BJ (cell line): ENCODE measurements at regions of chr16 and their contacts with region 1.

Region 1: GRCh38 chr16:48082516-48082915 is 73.3 kb downstream of the ABCC12 start:
- DNase-seq: peak; percentile 58
- H3K4me3 ChIP-seq: no peak overlapping the region
- H3K27me3 ChIP-seq: no peaks in the 10 kb centered on the region
- CTCF ChIP-seq: no peak

Region 2: DNA sequence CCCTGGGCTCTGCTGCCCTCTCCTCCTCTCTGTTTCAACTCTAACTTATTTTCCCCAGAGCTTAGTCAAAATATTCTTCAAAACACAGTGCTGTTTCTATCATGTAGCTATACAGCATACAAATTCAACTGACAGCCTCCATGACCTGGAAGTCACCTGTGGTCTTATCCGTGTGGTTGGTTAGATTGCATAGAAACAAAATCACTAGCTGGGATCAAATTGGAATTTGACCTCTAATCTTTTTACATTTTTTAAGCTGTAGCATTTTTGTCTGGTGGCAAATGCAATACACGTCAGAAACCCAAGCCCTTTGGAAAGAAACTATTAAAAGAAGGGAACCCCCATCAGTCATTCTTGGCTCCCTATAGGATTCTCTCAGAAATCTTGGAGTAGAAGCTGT is 16.0 kb after region 1 on chr16:
- CTCF ChIA-PET with region 1: no interaction called
- POLR2A ChIA-PET with region 1: interaction called, 11 read pairs
- DNase-seq: no peak
- H3K4me3 ChIP-seq: no peak overlapping the region
- H3K27me3 ChIP-seq: no peaks in the 10 kb centered on the region; the same call in 1 of the 2 replicates
- CTCF ChIP-seq: no peak